Activated naive CD4-positive, alpha-beta T cell treated with anti-CD3 and anti-CD28 coated beads, Interleukin-2, amount 10 ng/mL, durations not matched to agents 7 days and 5 days (primary cell): ENCODE measurements at regions of chr2 and their contacts with region 1.

Region 1: DNA sequence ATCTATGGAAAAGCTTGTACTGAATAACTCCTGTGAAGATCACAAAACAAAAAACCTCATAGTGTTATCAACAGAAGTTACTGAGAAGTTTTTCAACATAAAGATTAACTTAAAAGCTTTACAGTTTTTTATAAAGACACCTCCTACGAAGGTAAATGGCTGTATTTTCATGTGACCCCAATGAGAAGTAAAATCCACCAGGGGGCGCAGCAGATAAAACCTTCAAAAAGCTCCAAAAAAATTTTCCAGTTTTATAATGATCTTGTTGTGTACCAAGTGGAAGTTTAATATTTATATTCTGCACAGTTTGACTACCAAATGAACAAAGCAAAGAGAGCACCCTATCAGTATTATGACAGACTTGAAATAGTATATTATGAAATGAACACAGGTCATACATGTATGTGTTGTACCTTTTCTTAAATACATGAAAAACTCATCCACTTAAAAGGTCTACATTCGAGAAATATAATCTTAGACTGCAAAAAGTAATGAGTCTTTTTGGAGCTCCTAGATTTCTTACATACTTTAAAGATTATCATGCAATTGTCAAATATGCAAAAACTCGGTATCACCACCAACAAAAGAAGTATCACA is 38.5 kb downstream of the PNO1 start:
- DNase-seq: peak; percentile 50
- H3K4me3 Mint-ChIP-seq: no peak overlapping the region
- H3K27ac Mint-ChIP-seq: no peak overlapping the region
- H3K4me1 Mint-ChIP-seq: peaks cover 12% of the 10 kb centered on the region
- H3K27me3 Mint-ChIP-seq: no peaks in the 10 kb centered on the region

Region 2: GRCh38 chr2:67726421-67726820 is 469.8 kb before region 1 on chr2:
- CTCF ChIA-PET with region 1: no interaction called
- DNase-seq: no peak
- H3K4me3 Mint-ChIP-seq: no peak overlapping the region
- H3K27ac Mint-ChIP-seq: no peak overlapping the region
- H3K4me1 Mint-ChIP-seq: no peaks in the 10 kb centered on the region
- H3K27me3 Mint-ChIP-seq: no peaks in the 10 kb centered on the region

Region 3: DNA sequence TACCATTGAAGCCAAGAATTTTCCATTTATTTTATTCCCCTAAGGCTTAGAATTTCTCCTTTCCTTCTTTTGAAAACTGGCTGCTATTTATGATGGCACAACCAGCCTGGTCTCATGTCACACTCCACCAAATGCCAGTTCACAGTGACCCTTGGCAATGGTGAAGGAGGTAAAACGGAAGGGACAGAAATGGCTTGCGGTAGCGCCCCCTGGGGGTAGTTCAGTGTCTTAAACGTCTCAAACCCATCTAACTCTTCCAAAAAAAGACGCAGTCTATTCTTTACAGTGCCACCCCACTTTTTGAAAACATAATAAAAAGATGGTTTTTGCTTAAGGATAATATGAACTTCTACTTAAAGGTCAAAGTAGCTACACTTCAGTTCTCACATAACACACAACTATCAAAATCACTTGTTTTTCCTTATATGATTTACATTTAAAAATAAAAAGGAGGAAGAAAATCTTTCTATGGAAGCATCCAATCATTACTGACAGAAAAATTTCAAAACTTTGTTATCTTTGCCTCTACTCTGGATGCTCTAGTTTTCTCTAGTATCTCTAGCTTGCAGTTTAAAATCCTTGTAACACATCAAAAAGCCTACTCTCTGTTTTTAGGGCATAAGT is 10.6 kb before region 1 on chr2:
- CTCF ChIA-PET with region 1: interaction called, 11 read pairs
- DNase-seq: peak; percentile 67
- H3K4me3 Mint-ChIP-seq: no peak overlapping the region
- H3K27ac Mint-ChIP-seq: peak overlapping the region; percentile 42
- H3K4me1 Mint-ChIP-seq: peaks cover 12% of the 10 kb centered on the region
- H3K27me3 Mint-ChIP-seq: no peaks in the 10 kb centered on the region

Region 4: GRCh38 chr2:68225119-68225632 is 29.0 kb after region 1 on chr2:
- CTCF ChIA-PET with region 1: interaction called, 31 read pairs
- DNase-seq: peak; percentile 38
- H3K4me3 Mint-ChIP-seq: no peak overlapping the region
- H3K27ac Mint-ChIP-seq: no peak overlapping the region
- H3K4me1 Mint-ChIP-seq: peaks cover 43% of the 10 kb centered on the region
- H3K27me3 Mint-ChIP-seq: no peaks in the 10 kb centered on the region

Region 5: DNA sequence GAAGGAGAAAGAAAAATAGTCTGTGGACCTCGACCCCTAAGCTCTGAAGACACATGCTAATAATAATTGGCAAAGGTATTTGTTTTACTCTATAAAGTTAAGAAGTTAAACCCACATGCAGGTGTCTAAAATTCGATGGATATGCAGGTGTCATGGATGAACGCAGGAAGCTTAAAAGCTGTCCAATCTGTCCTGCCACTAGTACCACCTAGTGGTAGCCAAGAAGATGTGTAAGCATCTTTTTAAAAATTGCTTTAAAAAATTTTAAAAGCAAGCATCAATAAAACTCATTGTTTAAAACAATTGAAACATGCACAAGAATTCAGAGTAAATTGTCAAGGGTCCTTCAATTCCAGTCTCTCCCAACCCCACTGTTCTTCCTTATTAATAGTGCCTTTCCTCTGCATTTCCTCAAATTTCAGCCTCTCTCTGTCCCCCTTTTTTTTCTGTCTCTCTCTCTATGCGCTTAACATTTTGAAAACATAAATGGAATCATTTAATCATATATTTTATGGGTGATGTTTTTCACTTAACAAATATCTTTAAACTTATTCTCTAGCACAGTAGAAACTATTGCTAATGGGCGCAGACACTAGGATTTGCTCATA is 86.7 kb after region 1 on chr2:
- CTCF ChIA-PET with region 1: interaction called, 13 read pairs
- DNase-seq: peak; percentile 27
- H3K4me3 Mint-ChIP-seq: no peak overlapping the region
- H3K27ac Mint-ChIP-seq: no peak overlapping the region
- H3K4me1 Mint-ChIP-seq: no peaks in the 10 kb centered on the region
- H3K27me3 Mint-ChIP-seq: peaks cover 24% of the 10 kb centered on the region